K562 (cell line): ENCODE measurements at regions of chr12 and their contacts with region 1.

Region 1: GRCh38 chr12:7859552-7859951 is 13.2 kb downstream of the SLC2A14 start:
- DNase-seq: no peak
- ATAC-seq: no peak
- H3K4me3 ChIP-seq: no peak overlapping the region
- H3K27ac ChIP-seq: no peak overlapping the region
- H3K4me1 ChIP-seq: peaks cover under 1 to 3% of the 10 kb centered on the region in 2 experiments; a peak in 2 of 5 replicates
- H3K27me3 ChIP-seq: no peaks in the 10 kb centered on the region
- CTCF ChIP-seq: no peak
- EP300 ChIP-seq: no peak
- POLR2A ChIP-seq: no peak
- RAD21 ChIP-seq: no peak

Region 2: GRCh38 chr12:7995266-7995963 is 135.9 kb after region 1 on chr12:
- CTCF ChIA-PET with region 1: interaction called, 23 read pairs
- POLR2A ChIA-PET with region 1: interaction called, 3 read pairs
- in situ Hi-C with region 1: loop called (anchors 5 kb)
- intact Hi-C with region 1: loop called (anchors 1 kb)
- DNase-seq: peak; percentile 37 to 78 (median 41)
- ATAC-seq: peak; percentile 99
- H3K4me3 ChIP-seq: no peak overlapping the region
- H3K27ac ChIP-seq: no peak overlapping the region
- H3K4me1 ChIP-seq: peaks cover 2 to 12% of the 10 kb centered on the region in 2 experiments; a peak in 3 of 5 replicates
- H3K27me3 ChIP-seq: no peaks in the 10 kb centered on the region
- CTCF ChIP-seq: peak; percentile 75 to 80 (median 78)
- EP300 ChIP-seq: no peak
- POLR2A ChIP-seq: no peak
- RAD21 ChIP-seq: peak; percentile 95 to 97